ENCODE measurements at regions of chrX and their contacts with region 1.

Region 1: DNA sequence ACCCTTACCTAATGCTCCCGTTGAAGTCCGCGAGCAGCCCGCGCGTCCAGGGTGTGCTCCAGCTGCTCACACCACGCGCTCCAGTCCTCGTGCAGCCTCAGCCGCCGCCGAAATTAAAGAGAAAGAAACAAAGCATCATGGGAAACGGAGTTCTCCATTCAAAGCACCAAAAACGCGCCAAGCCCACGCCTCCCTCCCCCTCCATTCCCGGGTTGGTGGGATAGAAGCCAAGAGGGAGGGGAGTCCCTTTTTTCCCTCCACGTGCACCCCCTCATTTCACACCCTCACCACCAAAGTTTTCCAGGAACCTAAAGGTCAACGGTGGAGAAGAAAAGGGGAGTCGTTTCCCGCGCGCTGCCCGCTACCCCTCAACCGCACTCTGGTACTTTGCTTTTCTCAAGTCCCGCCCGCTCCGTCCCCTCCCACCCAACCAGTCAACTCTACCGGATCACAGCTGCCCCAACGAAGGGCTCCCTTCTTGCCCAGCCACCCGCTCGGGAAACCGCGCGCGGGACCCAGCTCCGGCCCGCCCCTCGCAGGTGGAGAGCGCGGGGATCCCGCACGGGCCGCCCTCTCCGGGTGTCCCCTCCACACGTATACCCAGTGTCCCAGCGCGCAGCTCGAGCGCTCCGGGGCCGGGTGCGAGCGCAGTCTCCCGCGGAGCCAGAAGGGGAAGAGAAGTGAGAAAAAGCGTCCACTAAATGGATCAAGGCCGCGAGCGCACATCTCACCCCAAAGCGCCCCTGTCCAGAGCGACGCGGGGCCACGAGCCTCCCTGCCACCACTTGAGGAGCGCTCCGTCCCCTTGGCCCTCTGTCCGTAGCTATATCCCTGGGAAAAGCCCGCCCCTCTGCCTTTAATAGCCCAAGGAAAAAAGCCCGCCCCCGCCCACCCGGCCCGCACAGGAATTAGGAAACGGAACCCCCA is 65.1 kb upstream of the CCDC160 start:
- DNase-seq: peak in 7 of 14 experiments; percentile 3 to 50 (median 31)
- ATAC-seq: peak; percentile 45
- H3K4me3 ChIP-seq: peak overlapping the region; percentile 62
- H3K4me3 Mint-ChIP-seq: peak overlapping the region; percentile 95
- H3K27ac ChIP-seq: no peak overlapping the region
- H3K27ac Mint-ChIP-seq: no peak overlapping the region
- H3K4me1 ChIP-seq: peaks cover 13% of the 10 kb centered on the region
- H3K4me1 Mint-ChIP-seq: peaks cover 14% of the 10 kb centered on the region
- H3K27me3 ChIP-seq: peaks cover 0 to 15% of the 10 kb centered on the region in 2 experiments
- H3K27me3 Mint-ChIP-seq: peaks cover 18% of the 10 kb centered on the region
- CTCF ChIP-seq: no peak

Region 2: GRCh38 chrX:133335027-133335426 is 836.9 kb before region 1 on chrX:
- CTCF ChIA-PET with region 1: no interaction called
- POLR2A ChIA-PET with region 1: no interaction called
- intact Hi-C with region 1: no loop called
- DNase-seq: peak in 3 of 14 experiments; percentile 5 to 13 (median 6)
- ATAC-seq: no peak
- H3K4me3 ChIP-seq: no peak overlapping the region
- H3K4me3 Mint-ChIP-seq: no peak overlapping the region
- H3K27ac ChIP-seq: no peak overlapping the region
- H3K27ac Mint-ChIP-seq: no peak overlapping the region
- H3K4me1 ChIP-seq: no peaks in the 10 kb centered on the region
- H3K4me1 Mint-ChIP-seq: no peaks in the 10 kb centered on the region
- H3K27me3 ChIP-seq: no peaks in the 10 kb centered on the region
- H3K27me3 Mint-ChIP-seq: no peaks in the 10 kb centered on the region
- CTCF ChIP-seq: no peak

Region 3: DNA sequence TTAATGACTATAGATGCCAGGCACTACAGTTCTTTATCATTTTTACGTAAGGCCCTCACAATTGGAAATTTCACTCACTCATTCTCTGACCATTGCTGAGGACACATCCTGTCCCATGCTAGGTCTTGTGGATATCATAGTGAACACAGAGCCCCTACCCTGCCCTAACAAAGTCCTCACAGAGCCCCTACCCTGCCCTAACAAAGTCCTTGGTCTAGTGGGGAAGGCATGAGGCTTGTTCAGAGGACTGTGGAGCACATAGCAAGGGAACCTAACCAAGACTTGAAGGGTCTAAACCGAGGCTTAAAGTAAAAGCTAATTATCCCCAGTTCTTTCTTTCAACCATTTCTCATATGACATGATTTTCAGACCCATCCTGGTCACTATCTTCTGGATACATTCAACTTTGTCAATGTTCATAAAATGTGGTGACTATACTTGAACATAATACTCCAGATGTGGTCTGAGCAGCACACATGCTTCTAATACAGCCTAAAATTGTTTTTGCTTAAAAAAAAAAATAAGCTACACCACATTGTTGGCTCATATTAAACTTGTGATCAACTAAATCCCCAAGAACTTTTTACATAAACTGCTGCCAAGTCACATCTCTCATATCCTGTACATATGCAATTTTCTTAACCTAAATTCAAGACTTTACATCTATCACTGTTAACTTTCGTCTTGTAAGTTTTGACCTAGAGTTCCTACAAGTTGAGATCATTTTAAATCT is 263.5 kb before region 1 on chrX:
- CTCF ChIA-PET with region 1: no interaction called
- POLR2A ChIA-PET with region 1: no interaction called
- intact Hi-C with region 1: no loop called
- DNase-seq: no peak
- ATAC-seq: no peak
- H3K4me3 ChIP-seq: no peak overlapping the region
- H3K4me3 Mint-ChIP-seq: no peak overlapping the region
- H3K27ac ChIP-seq: no peak overlapping the region
- H3K27ac Mint-ChIP-seq: no peak overlapping the region
- H3K4me1 ChIP-seq: no peaks in the 10 kb centered on the region
- H3K4me1 Mint-ChIP-seq: no peaks in the 10 kb centered on the region
- H3K27me3 ChIP-seq: no peaks in the 10 kb centered on the region
- H3K27me3 Mint-ChIP-seq: no peaks in the 10 kb centered on the region
- CTCF ChIP-seq: no peak

Region 4: DNA sequence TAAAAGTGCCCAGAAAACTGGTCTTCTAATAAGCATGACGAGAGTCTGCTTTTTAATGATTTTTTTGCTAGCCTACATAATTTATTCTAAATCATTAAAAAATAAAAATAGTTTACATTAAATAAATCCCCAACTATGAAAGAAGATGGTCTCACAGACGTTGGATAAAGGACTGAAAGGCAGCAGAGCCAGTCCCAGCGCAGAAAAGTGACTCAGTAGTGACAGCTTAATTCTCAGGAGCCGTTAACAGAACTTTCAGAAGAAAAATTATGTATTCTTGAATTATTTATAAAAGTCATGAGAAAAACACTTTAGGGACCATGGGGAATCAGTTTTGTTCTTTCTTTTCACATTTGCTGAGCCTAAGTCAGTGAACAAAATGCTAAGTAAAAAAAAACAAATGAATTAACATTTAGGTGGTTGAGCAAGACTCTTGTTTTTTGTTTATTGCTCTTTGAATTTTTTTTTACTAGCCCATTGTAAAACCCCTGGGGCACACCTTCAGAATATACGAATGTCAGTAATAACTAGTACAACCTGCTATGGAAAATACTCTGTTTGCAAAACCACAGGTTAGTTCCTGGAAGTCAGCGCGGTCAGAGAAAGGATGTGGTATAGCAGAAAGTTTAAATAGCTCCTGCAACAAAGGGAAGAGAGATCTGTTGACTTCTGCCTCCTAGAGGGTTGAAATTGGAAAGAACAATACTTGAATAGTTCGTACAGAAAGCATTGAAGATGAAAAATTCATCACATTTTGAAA is 14.6 kb after region 1 on chrX:
- CTCF ChIA-PET with region 1: no interaction called
- POLR2A ChIA-PET with region 1: interaction called, 13 read pairs
- intact Hi-C with region 1: no loop called
- DNase-seq: peak in 12 of 14 experiments; percentile 8 to 86 (median 42)
- ATAC-seq: peak; percentile 92
- H3K4me3 ChIP-seq: no peak overlapping the region
- H3K4me3 Mint-ChIP-seq: peak overlapping the region; percentile 72
- H3K27ac ChIP-seq: no peak overlapping the region
- H3K27ac Mint-ChIP-seq: peak overlapping the region; percentile 22
- H3K4me1 ChIP-seq: peaks cover 19% of the 10 kb centered on the region
- H3K4me1 Mint-ChIP-seq: peaks cover 37% of the 10 kb centered on the region
- H3K27me3 ChIP-seq: no peaks in the 10 kb centered on the region
- H3K27me3 Mint-ChIP-seq: peaks cover 14% of the 10 kb centered on the region
- CTCF ChIP-seq: peak; percentile 25

Measured in CD4-positive, alpha-beta T cell (primary cell).